ENCODE measurements at regions of chr10 and their contacts with region 1.

Region 1: DNA sequence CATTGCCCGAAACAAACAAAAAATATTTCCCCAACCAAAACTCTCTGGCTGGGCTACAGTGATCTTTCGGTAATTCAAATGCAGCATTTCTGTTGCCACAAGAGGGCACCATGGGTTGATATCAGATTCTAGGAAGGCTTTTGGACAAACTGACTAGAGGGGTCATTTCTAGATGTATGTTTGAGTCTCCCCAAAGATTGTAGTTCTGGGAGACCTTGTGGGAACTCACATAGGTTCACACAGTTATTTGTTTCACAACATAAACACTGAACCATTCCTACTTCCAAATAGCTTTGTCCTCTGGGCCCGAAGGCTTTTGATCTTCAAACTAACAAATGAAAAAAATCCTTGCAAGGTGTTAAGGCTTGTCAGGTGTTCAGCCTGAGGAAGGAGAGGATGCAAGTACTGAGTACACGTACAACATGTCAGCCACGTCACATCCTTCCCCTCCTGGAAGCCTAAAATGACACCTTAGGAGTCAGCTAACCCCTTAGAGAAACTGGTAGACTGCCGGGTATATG is 37.0 kb upstream of the IL15RA start:
- DNase-seq: peak; percentile 78
- ATAC-seq: peak; percentile 81
- H3K4me3 Mint-ChIP-seq: peak overlapping the region; percentile 19
- H3K27ac Mint-ChIP-seq: peak overlapping the region; percentile 97
- H3K4me1 Mint-ChIP-seq: peaks cover 48% of the 10 kb centered on the region
- H3K27me3 Mint-ChIP-seq: no peaks in the 10 kb centered on the region

Region 2: DNA sequence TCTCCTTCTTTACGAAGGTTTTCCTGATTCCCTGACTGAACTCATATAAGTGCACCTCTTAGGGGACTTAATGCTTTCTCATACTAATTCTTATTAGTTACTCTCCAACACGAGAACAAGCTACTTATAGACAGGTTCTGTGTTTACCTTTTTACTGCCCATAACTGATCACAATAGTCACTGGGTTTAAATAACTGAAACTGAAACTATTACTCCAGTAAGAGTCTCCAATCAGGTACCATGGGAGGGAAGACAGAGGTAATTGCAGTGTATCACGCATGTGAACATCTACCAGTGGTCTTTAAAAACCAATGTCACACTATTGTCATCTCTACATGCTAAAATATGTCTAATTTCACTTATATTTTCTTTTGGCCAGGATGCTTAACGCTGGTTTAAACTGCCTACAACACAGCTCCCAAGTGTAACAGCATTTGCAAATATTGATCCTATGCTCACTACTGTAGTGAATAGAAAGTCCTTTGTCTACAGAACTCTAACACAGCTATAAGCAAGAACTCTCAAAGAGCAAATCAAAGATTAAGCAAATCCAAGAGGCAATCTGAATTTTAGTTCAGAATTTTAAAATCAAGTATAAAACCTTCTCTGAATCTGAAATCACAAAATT is 204.7 kb before region 1 on chr10:
- CTCF ChIA-PET with region 1: no interaction called
- POLR2A ChIA-PET with region 1: no interaction called
- DNase-seq: no peak
- ATAC-seq: no peak
- H3K4me3 Mint-ChIP-seq: peak overlapping the region; percentile 86
- H3K27ac Mint-ChIP-seq: peak overlapping the region; percentile 11
- H3K4me1 Mint-ChIP-seq: peaks cover 52% of the 10 kb centered on the region
- H3K27me3 Mint-ChIP-seq: no peaks in the 10 kb centered on the region

Region 3: DNA sequence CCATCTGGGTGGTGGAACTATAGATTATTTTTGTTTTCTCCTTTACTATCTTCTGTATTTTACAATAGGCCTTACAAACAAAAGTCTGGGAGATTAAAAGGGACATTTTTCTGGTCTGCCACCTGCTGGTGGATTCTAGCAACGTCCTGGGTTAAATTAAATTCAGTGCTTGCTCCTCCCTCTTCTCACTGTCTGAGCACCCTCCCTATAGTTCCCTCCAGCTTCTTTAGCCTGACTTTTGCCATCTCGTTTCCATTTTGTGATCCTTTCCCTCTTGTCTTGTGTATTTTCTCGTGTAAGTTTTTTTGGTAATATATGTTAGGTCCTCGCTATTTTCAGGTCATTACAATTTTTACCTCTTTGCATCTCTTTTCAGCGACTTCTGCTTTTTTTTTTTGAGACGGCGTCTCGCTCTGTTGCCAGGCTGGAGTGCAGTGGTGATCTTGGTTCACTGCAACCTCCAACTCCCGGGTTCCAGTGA is 140.7 kb before region 1 on chr10:
- CTCF ChIA-PET with region 1: no interaction called
- POLR2A ChIA-PET with region 1: no interaction called
- DNase-seq: peak; percentile 78
- ATAC-seq: peak; percentile 94
- H3K4me3 Mint-ChIP-seq: peak overlapping the region; percentile 16
- H3K27ac Mint-ChIP-seq: no peak overlapping the region
- H3K4me1 Mint-ChIP-seq: peaks cover 6% of the 10 kb centered on the region
- H3K27me3 Mint-ChIP-seq: no peaks in the 10 kb centered on the region

Region 4: GRCh38 chr10:6002809-6003510 is 11.3 kb before region 1 on chr10:
- CTCF ChIA-PET with region 1: interaction called, 12 read pairs
- POLR2A ChIA-PET with region 1: no interaction called
- DNase-seq: peak; percentile 17
- ATAC-seq: no peak
- H3K4me3 Mint-ChIP-seq: no peak overlapping the region
- H3K27ac Mint-ChIP-seq: no peak overlapping the region
- H3K4me1 Mint-ChIP-seq: peaks cover 22% of the 10 kb centered on the region
- H3K27me3 Mint-ChIP-seq: peaks cover 3% of the 10 kb centered on the region

Region 5: GRCh38 chr10:6045314-6045848 is 31.1 kb after region 1 on chr10:
- CTCF ChIA-PET with region 1: interaction called, 55 read pairs
- POLR2A ChIA-PET with region 1: interaction called, 14 read pairs
- DNase-seq: peak; percentile 70
- ATAC-seq: peak; percentile 29
- H3K4me3 Mint-ChIP-seq: peak overlapping the region; percentile 54
- H3K27ac Mint-ChIP-seq: peak overlapping the region; percentile 84
- H3K4me1 Mint-ChIP-seq: peaks cover 91% of the 10 kb centered on the region
- H3K27me3 Mint-ChIP-seq: no peaks in the 10 kb centered on the region

Region 6: GRCh38 chr10:6056411-6057135 is 42.3 kb after region 1 on chr10:
- CTCF ChIA-PET with region 1: interaction called, 55 read pairs
- POLR2A ChIA-PET with region 1: interaction called, 14 read pairs
- DNase-seq: peak; percentile 20
- ATAC-seq: no peak
- H3K4me3 Mint-ChIP-seq: peak overlapping the region; percentile 91
- H3K27ac Mint-ChIP-seq: peak overlapping the region; percentile 66
- H3K4me1 Mint-ChIP-seq: peaks cover 77% of the 10 kb centered on the region
- H3K27me3 Mint-ChIP-seq: no peaks in the 10 kb centered on the region

Region 7: DNA sequence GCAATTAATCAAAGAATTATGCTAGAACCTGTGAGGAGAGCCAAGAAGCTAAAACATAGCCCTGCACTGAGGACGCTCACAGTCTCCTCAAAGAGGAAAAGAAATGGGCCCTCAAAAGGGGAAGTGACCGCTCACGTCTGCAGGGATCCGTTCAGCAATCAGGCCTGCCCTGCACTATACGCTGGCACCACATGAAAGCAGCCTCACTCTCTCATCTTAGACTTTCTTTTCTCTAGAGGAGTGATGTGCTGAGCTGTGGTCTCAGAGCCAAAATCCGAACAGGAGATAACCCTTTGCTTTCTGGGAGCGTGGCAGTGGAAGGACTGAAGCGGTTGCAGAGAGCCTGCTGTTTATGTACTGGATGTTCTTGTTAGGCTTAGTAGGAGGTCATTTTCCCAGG is 54.1 kb after region 1 on chr10:
- CTCF ChIA-PET with region 1: interaction called, 20 read pairs
- POLR2A ChIA-PET with region 1: interaction called, 3 read pairs
- DNase-seq: peak; percentile 81
- ATAC-seq: peak; percentile 77
- H3K4me3 Mint-ChIP-seq: peak overlapping the region; percentile 74
- H3K27ac Mint-ChIP-seq: peak overlapping the region; percentile 95
- H3K4me1 Mint-ChIP-seq: peaks cover 94% of the 10 kb centered on the region
- H3K27me3 Mint-ChIP-seq: no peaks in the 10 kb centered on the region

Region 8: DNA sequence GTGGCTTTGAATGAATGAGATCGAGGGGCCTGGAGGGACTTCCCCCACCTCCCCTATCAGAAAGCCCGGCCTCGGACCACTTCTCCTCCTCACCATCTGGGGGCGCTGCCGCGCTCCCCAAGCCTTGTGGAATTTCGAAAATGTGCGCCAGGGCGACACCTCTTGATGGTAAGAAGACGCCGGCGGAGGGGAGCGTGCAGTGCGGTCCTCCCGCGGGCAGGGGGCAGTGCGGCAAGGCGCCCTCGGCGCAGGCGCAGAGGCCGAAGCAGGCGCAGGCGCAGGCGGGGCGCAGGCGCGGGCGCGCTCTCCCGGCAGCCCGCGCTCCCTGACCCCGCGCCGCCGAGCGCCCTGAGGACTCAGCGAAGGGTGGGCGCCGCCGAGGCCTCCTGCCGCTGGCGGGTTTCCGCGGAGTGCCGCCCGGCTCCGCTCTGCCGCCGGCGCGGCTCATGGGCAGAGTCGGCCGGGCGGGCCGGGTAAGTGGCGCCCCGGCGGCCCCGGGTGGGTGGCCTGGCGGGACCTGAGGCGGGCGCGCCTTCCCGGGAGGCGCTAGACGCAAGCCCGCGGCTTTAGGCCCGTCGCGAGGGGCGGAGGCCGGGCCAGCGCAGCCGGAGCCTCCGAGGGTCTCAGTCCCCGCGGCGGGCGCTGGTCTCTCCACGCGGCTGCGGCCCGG is 74.6 kb after region 1 on chr10 and contains the start of gene RBM17:
- CTCF ChIA-PET with region 1: interaction called, 55 read pairs
- POLR2A ChIA-PET with region 1: no interaction called
- DNase-seq: peak; percentile 98
- ATAC-seq: peak; percentile 85
- H3K4me3 Mint-ChIP-seq: peak within 1 kb of the TSS; percentile 98
- H3K27ac Mint-ChIP-seq: peak within 1 kb of the TSS; percentile 88
- H3K4me1 Mint-ChIP-seq: peaks cover 79% of the 10 kb centered on the region
- H3K27me3 Mint-ChIP-seq: no peaks in the 10 kb centered on the region
- total RNA-seq, gene RBM17: 213 to 217 TPM